ENCODE measurements at regions of chr2 and their contacts with region 1.

Region 1: DNA sequence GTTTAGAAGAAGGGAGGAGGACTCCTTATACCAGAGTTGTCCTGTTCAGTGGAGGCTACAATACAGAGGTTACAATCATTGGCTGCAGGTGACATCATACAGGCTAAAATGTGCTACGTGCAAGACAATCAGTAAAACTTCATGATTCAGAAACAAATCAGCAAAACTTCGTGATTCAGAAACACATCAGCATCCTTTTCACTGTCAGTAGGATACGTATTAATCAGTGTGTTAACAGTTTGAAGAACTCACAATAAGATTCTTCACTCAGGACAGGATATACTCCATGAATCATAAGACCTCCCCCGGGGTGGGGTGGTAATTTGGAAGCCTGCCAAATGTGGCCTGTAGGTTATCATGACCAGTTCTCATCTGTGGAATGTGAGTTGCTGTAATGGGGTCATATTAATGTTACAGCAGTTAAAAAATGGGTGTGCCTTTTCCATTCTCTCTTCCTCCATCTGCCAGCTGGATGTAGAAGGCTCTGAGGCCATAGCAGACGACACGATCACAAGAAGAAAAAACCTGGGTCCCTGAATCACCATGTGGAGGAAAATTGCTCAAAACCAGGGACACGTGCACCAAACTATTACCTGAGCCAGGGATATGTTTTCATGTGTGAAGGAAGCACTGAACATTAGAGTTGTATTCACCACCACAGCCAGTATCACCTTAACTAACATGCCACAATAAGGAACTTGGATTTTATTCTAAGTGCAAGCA is 134.8 kb upstream of the CREB1 start:
- DNase-seq: peak in 2 of 3 donors; percentile 49 to 58
- ATAC-seq: peak; percentile 48 to 95
- H3K4me3 ChIP-seq: no peak overlapping the region
- H3K27ac ChIP-seq: no peak overlapping the region
- H3K4me1 ChIP-seq: no peaks in the 10 kb centered on the region
- H3K27me3 ChIP-seq: no peaks in the 10 kb centered on the region

Region 2: GRCh38 chr2:207341804-207342203 is 53.2 kb before region 1 on chr2:
- intact Hi-C with region 1: loop called in 1 of 4 experiments (anchors 10 kb)
- DNase-seq: no peak
- ATAC-seq: no peak
- H3K4me3 ChIP-seq: no peak overlapping the region
- H3K27ac ChIP-seq: no peak overlapping the region
- H3K4me1 ChIP-seq: peaks cover 2% of the 10 kb centered on the region
- H3K27me3 ChIP-seq: no peaks in the 10 kb centered on the region